ENCODE measurements at regions of chr6 and their contacts with region 1.

Region 1: GRCh38 chr6:134111062-134111677 is 58.7 kb upstream of the SLC2A12 start:
- DNase-seq: peak in 12 of 14 experiments; percentile 3 to 79 (median 22)
- ATAC-seq: peak; percentile 84
- H3K4me3 ChIP-seq: no peak overlapping the region
- H3K4me3 Mint-ChIP-seq: no peak overlapping the region
- H3K27ac ChIP-seq: no peak overlapping the region
- H3K27ac Mint-ChIP-seq: no peak overlapping the region
- H3K4me1 ChIP-seq: no peaks in the 10 kb centered on the region
- H3K4me1 Mint-ChIP-seq: no peaks in the 10 kb centered on the region
- H3K27me3 ChIP-seq: peaks cover 0 to 4% of the 10 kb centered on the region in 2 experiments
- H3K27me3 Mint-ChIP-seq: peaks cover 12% of the 10 kb centered on the region
- CTCF ChIP-seq: peak; percentile 93

Region 2: GRCh38 chr6:134123666-134124208 is 12.6 kb after region 1 on chr6:
- CTCF ChIA-PET with region 1: interaction called, 16 read pairs
- POLR2A ChIA-PET with region 1: no interaction called
- intact Hi-C with region 1: no loop called
- DNase-seq: peak in 8 of 14 experiments; percentile 8 to 72 (median 40)
- ATAC-seq: peak; percentile 100
- H3K4me3 ChIP-seq: no peak overlapping the region
- H3K4me3 Mint-ChIP-seq: no peak overlapping the region
- H3K27ac ChIP-seq: no peak overlapping the region
- H3K27ac Mint-ChIP-seq: peak overlapping the region; percentile 51
- H3K4me1 ChIP-seq: no peaks in the 10 kb centered on the region
- H3K4me1 Mint-ChIP-seq: peaks cover 6% of the 10 kb centered on the region
- H3K27me3 ChIP-seq: no peaks in the 10 kb centered on the region
- H3K27me3 Mint-ChIP-seq: no peaks in the 10 kb centered on the region
- CTCF ChIP-seq: peak; percentile 86

Region 3: GRCh38 chr6:134882426-134883038 is 771.4 kb after region 1 on chr6:
- CTCF ChIA-PET with region 1: interaction called, 3 read pairs
- POLR2A ChIA-PET with region 1: no interaction called
- intact Hi-C with region 1: loop called (anchors 5 kb)
- DNase-seq: peak; percentile 11 to 74 (median 43)
- ATAC-seq: peak; percentile 65
- H3K4me3 ChIP-seq: no peak overlapping the region
- H3K4me3 Mint-ChIP-seq: no peak overlapping the region
- H3K27ac ChIP-seq: no peak overlapping the region
- H3K27ac Mint-ChIP-seq: no peak overlapping the region
- H3K4me1 ChIP-seq: no peaks in the 10 kb centered on the region
- H3K4me1 Mint-ChIP-seq: no peaks in the 10 kb centered on the region
- H3K27me3 ChIP-seq: peaks cover 0 to 4% of the 10 kb centered on the region in 2 experiments
- H3K27me3 Mint-ChIP-seq: peaks cover 19% of the 10 kb centered on the region
- CTCF ChIP-seq: peak; percentile 83

Region 4: DNA sequence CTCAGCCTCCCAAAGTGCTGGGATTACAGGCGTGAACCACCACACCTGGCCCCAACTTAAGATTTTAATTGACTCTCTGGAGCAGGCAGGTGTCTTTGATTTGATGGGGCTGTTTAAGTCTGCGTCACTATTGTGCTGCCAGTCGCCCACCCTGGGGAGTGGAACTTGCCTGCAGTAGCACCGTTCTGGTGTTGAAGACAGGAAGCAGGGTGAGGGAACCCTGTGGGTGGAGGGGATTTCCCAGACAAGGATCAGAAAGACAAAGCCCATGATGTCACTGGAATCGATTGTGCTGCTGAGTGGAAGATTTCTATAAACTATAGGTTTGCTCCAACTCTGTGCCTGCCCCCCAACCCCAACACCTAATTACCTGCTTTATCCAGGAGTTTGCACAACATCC is 827.7 kb after region 1 on chr6:
- CTCF ChIA-PET with region 1: interaction called, 4 read pairs
- POLR2A ChIA-PET with region 1: no interaction called
- intact Hi-C with region 1: loop called in 1 of 2 experiments (anchors 1 kb)
- DNase-seq: peak in 9 of 14 experiments; percentile 2 to 74 (median 17)
- ATAC-seq: peak; percentile 91
- H3K4me3 ChIP-seq: no peak overlapping the region
- H3K4me3 Mint-ChIP-seq: no peak overlapping the region
- H3K27ac ChIP-seq: no peak overlapping the region
- H3K27ac Mint-ChIP-seq: no peak overlapping the region
- H3K4me1 ChIP-seq: peaks cover 6% of the 10 kb centered on the region
- H3K4me1 Mint-ChIP-seq: peaks cover 12% of the 10 kb centered on the region
- H3K27me3 ChIP-seq: no peaks in the 10 kb centered on the region
- H3K27me3 Mint-ChIP-seq: no peaks in the 10 kb centered on the region
- CTCF ChIP-seq: no peak

Measured in CD4-positive, alpha-beta T cell (primary cell).